Naive thymus-derived CD4-positive, alpha-beta T cell (primary cell): ENCODE measurements at regions of chr10 and their contacts with region 1.

Region 1: DNA sequence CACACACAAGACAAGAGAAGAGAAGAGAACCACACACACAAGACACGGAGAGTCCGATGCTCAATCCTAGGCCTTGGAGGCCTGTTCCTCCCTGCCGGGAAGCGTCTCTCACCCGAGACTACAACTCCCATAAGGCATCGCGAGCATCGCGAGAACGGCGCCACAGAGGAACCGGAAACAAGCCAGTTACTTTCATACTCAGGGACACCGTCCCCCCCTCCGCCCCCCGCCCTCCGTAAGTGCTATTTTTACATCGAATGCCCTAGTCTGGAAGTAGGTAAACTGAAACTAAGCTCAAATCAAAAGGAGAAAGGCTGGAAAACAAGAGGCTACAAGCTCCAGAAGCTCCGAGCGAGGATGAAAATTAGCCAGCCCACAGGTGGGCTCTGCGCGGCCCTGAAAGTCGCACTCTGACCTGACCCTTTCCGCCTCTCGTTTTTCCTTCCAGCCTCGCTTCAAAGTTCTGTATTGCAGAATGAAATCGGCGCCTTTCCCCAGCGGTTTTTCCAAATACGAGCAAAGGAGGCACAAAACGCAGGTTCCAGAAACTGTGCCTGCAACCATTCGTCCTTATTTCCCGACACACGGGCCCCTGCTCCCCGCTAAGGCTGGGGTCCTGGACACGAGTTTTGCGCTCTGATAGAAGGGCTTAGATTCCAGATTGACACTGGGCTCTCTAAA is 11.5 kb upstream of the DNAJC12 start:
- DNase-seq: peak; percentile 81 to 91 (median 89)
- ATAC-seq: peak; percentile 100
- H3K4me3 ChIP-seq: peak overlapping the region; percentile 79
- H3K4me3 Mint-ChIP-seq: peak overlapping the region; percentile 84 to 99 (median 96)
- H3K27ac ChIP-seq: peak overlapping the region; percentile 82
- H3K27ac Mint-ChIP-seq: peak overlapping the region; percentile 81 to 100 (median 97)
- H3K4me1 ChIP-seq: peaks cover 5 to 6% of the 10 kb centered on the region in 2 donors
- H3K4me1 Mint-ChIP-seq: peaks cover 5 to 12% (median 8%) of the 10 kb centered on the region in 7 donors
- H3K27me3 ChIP-seq: no peaks in the 10 kb centered on the region
- H3K27me3 Mint-ChIP-seq: no peaks in the 10 kb centered on the region

Region 2: DNA sequence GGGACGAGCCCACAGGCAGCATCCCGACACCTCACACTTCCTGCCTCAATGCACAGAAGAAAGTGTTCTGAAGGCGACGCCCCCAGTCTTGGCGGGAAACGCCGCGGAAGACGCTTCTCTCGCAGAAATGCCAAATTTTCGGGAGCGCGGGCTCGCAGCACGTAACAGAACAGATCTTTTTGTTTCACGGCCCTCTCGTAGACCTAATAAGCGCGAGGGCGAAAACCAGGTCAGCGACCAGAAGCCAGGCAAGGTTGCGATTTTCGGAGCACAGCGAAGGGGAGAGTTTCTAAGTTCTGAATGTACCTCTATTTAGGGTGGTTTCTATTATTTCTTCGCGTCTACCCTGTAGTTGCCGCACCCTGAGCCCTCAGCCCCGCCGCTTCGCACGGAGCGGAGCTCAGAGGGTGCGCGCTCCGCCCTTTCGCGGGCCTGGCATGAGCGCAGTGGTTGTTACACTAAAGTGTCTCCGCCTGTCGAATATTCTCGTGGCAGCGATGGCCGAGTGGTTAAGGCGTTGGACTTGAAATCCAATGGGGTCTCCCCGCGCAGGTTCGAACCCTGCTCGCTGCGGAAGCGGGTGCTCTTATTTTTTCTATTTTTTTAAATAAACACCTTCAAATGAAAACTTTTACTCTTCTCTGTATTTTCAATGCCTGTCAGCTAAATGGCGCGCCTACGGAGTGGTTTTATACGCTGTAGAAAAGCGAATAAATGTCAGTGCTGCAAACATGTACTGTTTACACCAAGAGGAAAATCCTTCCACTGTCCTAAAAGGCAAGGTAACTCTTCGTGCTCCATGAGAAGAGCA is 85.3 kb before region 1 on chr10:
- CTCF ChIA-PET with region 1: no interaction called
- POLR2A ChIA-PET with region 1: interaction called, 6 read pairs
- intact Hi-C with region 1: loop called in 1 of 2 experiments (anchors 1 kb)
- DNase-seq: peak; percentile 96 to 99 (median 98)
- ATAC-seq: peak; percentile 88
- H3K4me3 ChIP-seq: peak overlapping the region; percentile 99
- H3K4me3 Mint-ChIP-seq: peak overlapping the region; percentile 81 to 99 (median 94)
- H3K27ac ChIP-seq: peak overlapping the region; percentile 81
- H3K27ac Mint-ChIP-seq: peak overlapping the region; percentile 95 to 100 (median 100)
- H3K4me1 ChIP-seq: peaks cover 4 to 6% of the 10 kb centered on the region in 2 donors
- H3K4me1 Mint-ChIP-seq: peaks cover 0 to 37% (median 14%) of the 10 kb centered on the region in 7 donors
- H3K27me3 ChIP-seq: no peaks in the 10 kb centered on the region
- H3K27me3 Mint-ChIP-seq: peaks cover 0 to 16% (median 0%) of the 10 kb centered on the region in 5 donors

Region 3: DNA sequence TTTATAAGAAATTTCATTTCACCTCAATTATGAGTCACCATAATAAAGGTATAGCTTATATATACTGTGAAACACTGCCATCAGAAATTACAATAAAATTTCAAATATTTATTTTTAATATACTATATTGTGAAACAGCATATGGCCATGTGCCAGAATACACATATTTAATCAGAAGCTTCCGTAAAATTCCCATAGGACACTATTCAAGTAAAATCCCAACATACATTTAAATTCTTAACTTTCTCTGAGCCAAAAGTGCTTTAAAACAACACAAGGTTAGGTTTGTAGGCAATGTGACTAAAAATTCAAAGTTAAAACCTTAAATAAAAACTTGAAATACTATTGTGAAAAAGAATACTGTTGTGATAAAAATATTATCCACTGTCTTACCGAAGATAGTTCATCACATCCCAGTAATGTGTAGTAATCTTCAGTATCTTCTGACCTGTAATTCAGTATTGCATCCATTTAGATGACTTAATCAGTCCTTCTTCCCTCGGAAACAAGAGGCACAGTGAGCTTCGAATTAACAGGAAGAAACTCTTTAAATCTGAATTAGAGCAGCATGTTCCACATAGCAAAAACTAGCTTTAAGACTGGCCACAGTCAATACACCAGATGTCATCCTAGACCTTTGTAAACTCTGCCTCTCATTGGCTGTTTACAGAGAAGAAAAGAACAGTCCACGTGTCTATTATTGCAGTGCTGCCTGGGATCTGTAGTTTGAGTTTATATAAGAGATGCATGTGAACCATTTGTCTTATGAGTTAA is 11.7 kb before region 1 on chr10 and contains the start of gene DNAJC12:
- CTCF ChIA-PET with region 1: interaction called, 3 read pairs
- POLR2A ChIA-PET with region 1: no interaction called
- intact Hi-C with region 1: loop called in 1 of 2 experiments (anchors 1 kb)
- DNase-seq: peak in 5 of 9 donors; percentile 5 to 29 (median 12)
- ATAC-seq: peak; percentile 90
- H3K4me3 ChIP-seq: no peak within 1 kb of the TSS
- H3K4me3 Mint-ChIP-seq: peak within 1 kb of the TSS in 4 of 10 donors; percentile 3 to 82 (median 31)
- H3K27ac ChIP-seq: no peak within 1 kb of the TSS
- H3K27ac Mint-ChIP-seq: peak within 1 kb of the TSS in 4 of 9 donors; percentile 3 to 63 (median 37)
- H3K4me1 ChIP-seq: no peaks in the 10 kb centered on the region
- H3K4me1 Mint-ChIP-seq: peaks cover 0 to 12% (median 5%) of the 10 kb centered on the region in 7 donors
- H3K27me3 ChIP-seq: no peaks in the 10 kb centered on the region
- H3K27me3 Mint-ChIP-seq: no peaks in the 10 kb centered on the region
- total RNA-seq, gene DNAJC12: 7.2 TPM in 1 of 5 experiments, not detected in the others

Region 4: GRCh38 chr10:68074775-68075549 is 225.5 kb after region 1 on chr10 and contains the start of gene HERC4:
- CTCF ChIA-PET with region 1: no interaction called
- POLR2A ChIA-PET with region 1: interaction called, 6 read pairs
- intact Hi-C with region 1: loop called (anchors 1 kb)
- DNase-seq: peak; percentile 80 to 91 (median 89)
- ATAC-seq: peak; percentile 97
- H3K4me3 ChIP-seq: peak within 1 kb of the TSS; percentile 91
- H3K4me3 Mint-ChIP-seq: peak within 1 kb of the TSS; percentile 91 to 98 (median 96)
- H3K27ac ChIP-seq: peak within 1 kb of the TSS; percentile 96
- H3K27ac Mint-ChIP-seq: peak within 1 kb of the TSS; percentile 89 to 95 (median 94)
- H3K4me1 ChIP-seq: peaks cover 15 to 21% of the 10 kb centered on the region in 2 donors
- H3K4me1 Mint-ChIP-seq: peaks cover 26 to 51% (median 41%) of the 10 kb centered on the region in 7 donors
- H3K27me3 ChIP-seq: peaks cover 0 to 3% of the 10 kb centered on the region in 2 donors
- H3K27me3 Mint-ChIP-seq: peaks cover 0 to 2% (median 0%) of the 10 kb centered on the region in 5 donors
- total RNA-seq, gene HERC4: 65.7 to 113 (median 78.6) TPM

Region 5: GRCh38 chr10:68208424-68209042 is 359.1 kb after region 1 on chr10:
- CTCF ChIA-PET with region 1: no interaction called
- POLR2A ChIA-PET with region 1: no interaction called
- intact Hi-C with region 1: loop called in 1 of 2 experiments (anchors 2 kb)
- DNase-seq: no peak
- ATAC-seq: no peak
- H3K4me3 ChIP-seq: no peak overlapping the region
- H3K4me3 Mint-ChIP-seq: no peak overlapping the region
- H3K27ac ChIP-seq: no peak overlapping the region
- H3K27ac Mint-ChIP-seq: peak overlapping the region in 1 of 9 donors; percentile 22
- H3K4me1 ChIP-seq: no peaks in the 10 kb centered on the region
- H3K4me1 Mint-ChIP-seq: peaks cover 0 to 4% (median 0%) of the 10 kb centered on the region in 7 donors
- H3K27me3 ChIP-seq: no peaks in the 10 kb centered on the region
- H3K27me3 Mint-ChIP-seq: peaks cover 0 to 36% (median 10%) of the 10 kb centered on the region in 5 donors

Region 6: GRCh38 chr10:68526626-68527307 is 677.3 kb after region 1 on chr10:
- CTCF ChIA-PET with region 1: no interaction called
- POLR2A ChIA-PET with region 1: no interaction called
- intact Hi-C with region 1: loop called (anchors 2 to 5 kb)
- DNase-seq: peak in 1 of 9 donors; percentile 4
- ATAC-seq: no peak
- H3K4me3 ChIP-seq: peak overlapping the region; percentile 91
- H3K4me3 Mint-ChIP-seq: peak overlapping the region; percentile 87 to 94 (median 92)
- H3K27ac ChIP-seq: peak overlapping the region; percentile 96
- H3K27ac Mint-ChIP-seq: peak overlapping the region; percentile 78 to 97 (median 95)
- H3K4me1 ChIP-seq: peaks cover 0 to 5% of the 10 kb centered on the region in 2 donors
- H3K4me1 Mint-ChIP-seq: peaks cover 0 to 20% (median 7%) of the 10 kb centered on the region in 7 donors
- H3K27me3 ChIP-seq: no peaks in the 10 kb centered on the region
- H3K27me3 Mint-ChIP-seq: no peaks in the 10 kb centered on the region